Upper lobe of right lung (tissue), 1 donor: ENCODE measurements at regions of chr17 and their contacts with region 1.

Region 1: DNA sequence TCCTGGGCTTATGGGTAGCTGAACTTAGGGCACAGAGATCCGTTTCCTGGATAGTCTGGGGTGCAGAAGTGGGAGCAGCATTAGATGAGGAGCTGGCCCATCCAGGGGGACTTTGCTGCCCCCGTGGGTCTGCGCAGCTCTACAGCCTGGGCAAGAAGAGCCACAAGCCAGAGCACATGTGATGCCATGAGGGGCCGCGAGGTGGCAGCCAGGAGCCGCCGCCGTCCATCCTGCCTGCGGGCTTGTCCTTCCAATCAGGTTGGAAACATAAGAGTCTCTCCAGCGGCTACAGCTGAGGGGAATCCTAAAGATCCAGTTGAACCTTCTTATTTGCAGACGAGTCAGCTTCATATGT is 21.9 kb downstream of the C1QTNF1 start:
- DNase-seq: peak; percentile 86
- ATAC-seq: peak; percentile 86
- H3K4me3 ChIP-seq: no peak overlapping the region
- H3K27ac ChIP-seq: no peak overlapping the region
- H3K4me1 ChIP-seq: no peaks in the 10 kb centered on the region
- H3K27me3 ChIP-seq: no peaks in the 10 kb centered on the region
- CTCF ChIP-seq: peak; percentile 96

Region 2: GRCh38 chr17:79082311-79083190 is 36.7 kb after region 1 on chr17:
- intact Hi-C with region 1: loop called (anchors 5 kb)
- DNase-seq: peak; percentile 82
- ATAC-seq: peak; percentile 68
- H3K4me3 ChIP-seq: no peak overlapping the region
- H3K27ac ChIP-seq: no peak overlapping the region
- H3K4me1 ChIP-seq: no peaks in the 10 kb centered on the region
- H3K27me3 ChIP-seq: no peaks in the 10 kb centered on the region
- CTCF ChIP-seq: peak; percentile 76

Region 3: GRCh38 chr17:79160980-79161636 is 115.3 kb after region 1 on chr17:
- intact Hi-C with region 1: no loop called
- DNase-seq: no peak
- ATAC-seq: no peak
- H3K4me3 ChIP-seq: no peak overlapping the region
- H3K27ac ChIP-seq: no peak overlapping the region
- H3K4me1 ChIP-seq: no peaks in the 10 kb centered on the region
- H3K27me3 ChIP-seq: peaks cover 36% of the 10 kb centered on the region
- CTCF ChIP-seq: no peak